ENCODE measurements at regions of chr9 and their contacts with region 1.

Region 1: GRCh38 chr9:128203024-128203706 is at the start of gene DNM1:
- DNase-seq: peak; percentile 57 to 85 (median 77)
- H3K4me3 ChIP-seq: peak within 1 kb of the TSS; percentile 58 to 60
- H3K4me3 Mint-ChIP-seq: peak within 1 kb of the TSS; percentile 72 to 83 (median 80)
- H3K27ac ChIP-seq: no peak within 1 kb of the TSS
- H3K27ac Mint-ChIP-seq: peak within 1 kb of the TSS; percentile 53 to 94 (median 68)
- H3K4me1 ChIP-seq: peaks cover 13% of the 10 kb centered on the region
- H3K4me1 Mint-ChIP-seq: peaks cover 0 to 13% (median 6%) of the 10 kb centered on the region in 4 donors
- H3K27me3 ChIP-seq: no peaks in the 10 kb centered on the region
- H3K27me3 Mint-ChIP-seq: peaks cover 4% of the 10 kb centered on the region in 2 donors
- total RNA-seq, gene DNM1: 1.4 to 2.2 TPM

Region 2: DNA sequence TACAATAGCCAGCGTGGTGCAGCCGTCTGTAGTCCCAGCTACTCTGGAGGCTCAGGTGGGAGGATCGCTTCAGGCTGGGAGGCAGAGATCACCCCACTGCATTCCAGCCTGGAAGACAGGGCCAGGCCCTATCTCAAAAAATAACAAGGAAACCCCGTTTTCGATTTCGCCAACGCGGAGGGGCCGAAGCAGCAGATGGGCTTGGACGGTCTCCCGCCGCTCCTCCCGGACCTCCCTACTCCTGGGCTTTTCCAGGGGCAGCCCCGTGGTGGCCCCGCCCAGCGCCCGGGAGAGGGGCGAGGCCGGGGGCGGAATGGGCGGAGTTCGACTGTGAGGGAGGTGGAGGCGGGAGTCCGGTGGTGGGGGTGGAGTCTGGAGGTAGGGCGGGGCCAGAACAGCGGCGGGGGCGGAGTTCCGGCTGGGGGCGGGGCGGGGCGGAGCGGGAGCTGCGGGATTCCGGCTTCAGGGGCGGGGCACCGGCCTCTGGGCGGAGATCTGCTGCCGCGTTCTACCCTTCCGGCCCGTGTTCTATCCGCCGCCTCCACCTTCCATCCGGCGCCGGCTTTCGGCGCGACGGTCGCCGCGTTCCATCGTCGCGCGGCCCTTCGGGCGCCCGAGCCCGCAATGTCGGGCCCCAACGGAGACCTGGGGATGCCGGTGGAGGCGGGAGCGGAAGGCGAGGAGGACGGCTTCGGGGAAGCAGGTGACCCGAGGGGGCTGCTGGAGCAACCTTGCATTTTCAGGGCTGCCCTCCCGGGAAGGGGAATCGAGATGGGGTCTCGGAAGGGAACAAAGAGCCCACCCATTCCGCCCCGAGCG is 43.2 kb before region 1 on chr9 and contains the start of gene BBLN:
- CTCF ChIA-PET with region 1: no interaction called
- POLR2A ChIA-PET with region 1: no interaction called
- intact Hi-C with region 1: loop called (anchors 1 kb)
- DNase-seq: peak; percentile 87 to 91 (median 90)
- H3K4me3 ChIP-seq: peak within 1 kb of the TSS; percentile 89 to 90
- H3K4me3 Mint-ChIP-seq: peak within 1 kb of the TSS; percentile 81 to 90 (median 82)
- H3K27ac ChIP-seq: peak within 1 kb of the TSS; percentile 89
- H3K27ac Mint-ChIP-seq: peak within 1 kb of the TSS; percentile 89 to 97 (median 93)
- H3K4me1 ChIP-seq: peaks cover 16% of the 10 kb centered on the region
- H3K4me1 Mint-ChIP-seq: peaks cover 9 to 27% (median 20%) of the 10 kb centered on the region in 4 donors
- H3K27me3 ChIP-seq: no peaks in the 10 kb centered on the region
- H3K27me3 Mint-ChIP-seq: no peaks in the 10 kb centered on the region
- total RNA-seq, gene BBLN: 47.8 to 50.5 TPM

Region 3: DNA sequence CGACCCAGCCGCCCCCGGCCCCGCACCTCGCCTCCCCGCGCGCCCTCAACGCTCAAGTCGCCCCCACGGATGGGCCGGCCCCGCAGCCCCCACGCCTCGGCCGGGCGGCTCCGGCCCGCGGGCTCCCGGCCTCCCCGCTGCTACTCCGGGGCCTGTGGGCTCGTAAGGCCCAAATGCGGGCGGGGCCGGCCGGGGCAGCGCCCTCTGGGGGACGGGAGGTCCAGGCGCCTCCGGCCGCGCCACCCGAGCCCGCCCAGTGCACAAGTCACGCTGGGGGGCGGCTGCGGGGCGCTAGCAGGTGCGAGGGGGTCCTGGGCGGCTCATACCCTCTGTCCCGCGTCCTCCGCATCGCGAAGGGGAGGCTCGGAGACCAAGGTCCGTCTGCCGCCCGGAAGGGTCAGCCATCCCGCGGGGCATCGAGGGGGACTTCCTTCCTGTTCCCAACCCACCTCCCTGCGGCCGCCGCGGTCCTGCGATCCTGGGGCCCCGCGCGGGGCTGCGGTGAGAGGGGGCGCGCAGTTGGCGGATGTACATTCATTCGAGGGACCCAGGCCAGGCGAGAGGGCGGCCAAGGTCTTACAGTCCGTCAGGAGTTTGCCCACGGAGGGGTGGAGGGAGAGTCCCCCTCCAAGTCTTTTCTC is 11.6 kb before region 1 on chr9 and contains the start of gene CIZ1:
- CTCF ChIA-PET with region 1: interaction called, 10 read pairs
- POLR2A ChIA-PET with region 1: interaction called, 6 read pairs
- intact Hi-C with region 1: loop called (anchors 1 kb)
- DNase-seq: peak; percentile 61 to 77 (median 70)
- H3K4me3 ChIP-seq: peak within 1 kb of the TSS; percentile 81 to 82
- H3K4me3 Mint-ChIP-seq: peak within 1 kb of the TSS; percentile 88 to 98 (median 94)
- H3K27ac ChIP-seq: peak within 1 kb of the TSS; percentile 80
- H3K27ac Mint-ChIP-seq: peak within 1 kb of the TSS; percentile 76 to 97 (median 90)
- H3K4me1 ChIP-seq: peaks cover 22% of the 10 kb centered on the region
- H3K4me1 Mint-ChIP-seq: peaks cover 14 to 35% (median 27%) of the 10 kb centered on the region in 4 donors
- H3K27me3 ChIP-seq: no peaks in the 10 kb centered on the region
- H3K27me3 Mint-ChIP-seq: no peaks in the 10 kb centered on the region
- total RNA-seq, gene CIZ1: 156 to 165 TPM

Region 4: DNA sequence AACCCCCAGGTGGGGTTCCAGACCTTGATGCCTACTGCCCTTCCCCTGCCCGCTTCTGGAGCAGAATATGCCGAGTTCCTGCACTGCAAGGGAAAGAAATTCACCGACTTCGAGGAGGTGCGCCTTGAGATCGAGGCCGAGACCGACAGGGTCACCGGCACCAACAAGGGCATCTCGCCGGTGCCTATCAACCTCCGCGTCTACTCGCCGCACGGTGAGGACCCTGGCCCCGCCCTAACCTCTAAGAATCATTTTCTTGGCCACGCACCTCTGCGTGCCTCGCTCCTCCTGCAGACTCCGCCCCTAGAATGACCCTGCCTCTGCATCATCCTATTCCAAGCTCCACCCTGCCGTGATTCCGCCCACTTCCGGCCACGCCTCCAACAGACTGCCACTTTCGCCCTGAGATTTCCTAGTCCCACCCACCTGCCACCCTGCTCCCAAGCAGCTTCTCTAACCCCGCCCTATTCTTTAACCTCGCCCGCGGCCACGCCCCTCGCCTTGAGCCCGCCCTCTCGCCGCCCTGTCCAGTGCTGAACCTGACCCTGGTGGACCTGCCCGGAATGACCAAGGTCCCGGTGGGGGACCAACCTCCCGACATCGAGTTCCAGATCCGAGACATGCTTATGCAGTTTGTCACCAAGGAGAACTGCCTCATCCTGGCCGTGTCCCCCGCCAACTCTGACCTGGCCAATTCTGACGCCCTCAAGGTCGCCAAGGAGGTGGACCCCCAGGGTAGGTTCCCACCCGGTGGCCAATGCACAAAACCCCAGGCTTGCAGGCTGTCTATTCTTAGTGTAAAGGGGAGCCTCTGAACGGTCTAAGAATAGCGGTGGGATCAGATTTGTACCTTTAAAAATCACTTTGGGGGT is 15.6 kb after region 1 on chr9:
- CTCF ChIA-PET with region 1: interaction called, 3 read pairs
- POLR2A ChIA-PET with region 1: no interaction called
- intact Hi-C with region 1: loop called (anchors 1 kb)
- DNase-seq: peak; percentile 86 to 94 (median 87)
- H3K4me3 ChIP-seq: peak overlapping the region; percentile 31 to 39
- H3K4me3 Mint-ChIP-seq: peak overlapping the region; percentile 63 to 92 (median 82)
- H3K27ac ChIP-seq: no peak overlapping the region
- H3K27ac Mint-ChIP-seq: peak overlapping the region; percentile 54 to 93 (median 75)
- H3K4me1 ChIP-seq: peaks cover 15% of the 10 kb centered on the region
- H3K4me1 Mint-ChIP-seq: peaks cover 7 to 17% (median 12%) of the 10 kb centered on the region in 4 donors
- H3K27me3 ChIP-seq: no peaks in the 10 kb centered on the region
- H3K27me3 Mint-ChIP-seq: no peaks in the 10 kb centered on the region

Region 5: DNA sequence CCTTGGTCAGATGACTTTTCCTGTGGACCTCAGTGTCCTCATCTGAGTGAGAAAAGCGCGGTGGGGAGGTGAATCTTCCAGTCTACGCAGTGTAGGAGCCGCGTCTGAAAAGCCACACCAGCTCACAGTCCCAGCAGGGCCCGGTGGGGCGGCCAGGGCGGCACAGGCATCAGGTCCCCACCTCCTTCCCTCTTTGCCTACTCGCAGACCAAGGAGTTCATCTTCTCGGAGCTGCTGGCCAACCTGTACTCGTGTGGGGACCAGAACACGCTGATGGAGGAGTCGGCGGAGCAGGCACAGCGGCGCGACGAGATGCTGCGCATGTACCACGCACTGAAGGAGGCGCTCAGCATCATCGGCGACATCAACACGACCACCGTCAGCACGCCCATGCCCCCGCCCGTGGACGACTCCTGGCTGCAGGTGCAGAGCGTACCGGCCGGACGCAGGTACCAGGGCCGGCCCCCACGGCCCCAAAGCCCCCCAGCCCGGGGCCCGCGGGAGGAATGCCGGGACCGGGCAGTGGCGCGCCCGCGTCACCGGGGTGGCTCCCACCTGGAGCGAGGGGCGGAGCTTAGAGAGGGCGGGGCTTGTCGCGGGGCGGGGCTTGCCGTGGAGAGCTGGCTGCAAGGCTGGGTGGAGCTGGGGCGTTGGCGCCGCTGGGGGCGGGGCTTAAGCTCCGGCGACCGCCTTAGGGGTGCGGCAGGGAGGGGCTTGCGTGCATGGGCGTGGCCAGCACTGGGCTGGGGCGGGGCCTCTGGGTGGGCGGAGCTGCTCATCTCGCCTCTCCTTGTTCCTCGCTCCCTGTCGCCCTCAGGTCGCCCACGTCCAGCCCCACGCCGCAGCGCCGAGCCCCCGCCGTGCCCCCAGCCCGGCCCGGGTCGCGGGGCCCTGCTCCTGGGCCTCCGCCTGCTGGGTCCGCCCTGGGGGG is 47.0 kb after region 1 on chr9:
- CTCF ChIA-PET with region 1: no interaction called
- POLR2A ChIA-PET with region 1: interaction called, 3 read pairs
- intact Hi-C with region 1: loop called (anchors 1 kb)
- DNase-seq: peak; percentile 95 to 98 (median 96)
- H3K4me3 ChIP-seq: peak overlapping the region in 1 of 2 donors; percentile 75
- H3K4me3 Mint-ChIP-seq: peak overlapping the region; percentile 84 to 93 (median 87)
- H3K27ac ChIP-seq: peak overlapping the region; percentile 56
- H3K27ac Mint-ChIP-seq: peak overlapping the region; percentile 77 to 97 (median 94)
- H3K4me1 ChIP-seq: peaks cover 22% of the 10 kb centered on the region
- H3K4me1 Mint-ChIP-seq: peaks cover 10 to 30% (median 19%) of the 10 kb centered on the region in 4 donors
- H3K27me3 ChIP-seq: no peaks in the 10 kb centered on the region
- H3K27me3 Mint-ChIP-seq: peaks cover 4 to 5% of the 10 kb centered on the region in 2 donors

Region 6: DNA sequence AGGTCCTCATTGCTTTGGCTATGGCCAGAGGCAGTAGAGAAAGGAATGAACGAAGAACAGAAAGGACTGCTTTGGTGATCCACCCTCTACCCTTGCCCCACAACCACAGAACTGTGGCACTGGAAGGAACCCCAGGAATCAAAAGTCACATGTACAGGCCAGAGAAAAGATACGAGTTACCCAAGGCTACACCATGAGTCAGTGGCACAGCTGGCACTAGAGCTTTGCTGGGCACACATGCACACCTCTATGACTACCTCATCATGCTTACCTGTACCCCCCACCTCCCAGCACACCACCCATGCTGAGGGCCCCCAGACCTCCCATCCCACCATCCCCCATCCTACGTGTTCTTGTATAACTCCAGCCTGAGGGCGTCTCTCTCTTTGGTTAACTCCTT is 59.5 kb after region 1 on chr9:
- CTCF ChIA-PET with region 1: no interaction called
- POLR2A ChIA-PET with region 1: no interaction called
- intact Hi-C with region 1: no loop called
- DNase-seq: no peak
- H3K4me3 ChIP-seq: no peak overlapping the region
- H3K4me3 Mint-ChIP-seq: no peak overlapping the region
- H3K27ac ChIP-seq: no peak overlapping the region
- H3K27ac Mint-ChIP-seq: no peak overlapping the region
- H3K4me1 ChIP-seq: no peaks in the 10 kb centered on the region
- H3K4me1 Mint-ChIP-seq: no peaks in the 10 kb centered on the region
- H3K27me3 ChIP-seq: no peaks in the 10 kb centered on the region
- H3K27me3 Mint-ChIP-seq: no peaks in the 10 kb centered on the region